ENCODE measurements at regions of chr5 and their contacts with region 1.

Region 1: DNA sequence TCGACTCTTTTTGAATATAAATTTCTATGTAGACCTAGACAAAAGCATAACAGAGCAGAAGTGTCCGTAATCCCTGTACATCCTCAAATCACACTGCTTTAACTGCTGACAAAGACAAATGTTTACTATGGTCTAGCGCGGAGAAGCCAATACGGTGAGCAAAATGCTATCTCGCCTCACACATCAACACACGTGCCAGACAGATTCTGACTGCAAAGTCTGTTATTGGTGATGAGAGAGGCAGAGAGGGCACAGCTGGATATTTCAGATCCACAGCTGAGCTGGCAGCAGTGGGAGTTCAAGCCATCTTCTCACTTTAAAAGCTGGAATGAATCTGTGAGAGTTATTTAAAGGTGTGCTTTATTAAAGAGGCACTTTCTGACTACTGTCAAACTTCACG is 124.3 kb downstream of the ARL15 start:
- DNase-seq: no peak
- ATAC-seq: no peak
- H3K4me3 ChIP-seq: no peak overlapping the region
- H3K27ac ChIP-seq: no peak overlapping the region
- H3K4me1 ChIP-seq: no peaks in the 10 kb centered on the region
- H3K27me3 ChIP-seq: no peaks in the 10 kb centered on the region
- CTCF ChIP-seq: no peak

Region 2: GRCh38 chr5:52983731-52984636 is 1202.1 kb before region 1 on chr5:
- CTCF ChIA-PET with region 1: no interaction called
- POLR2A ChIA-PET with region 1: no interaction called
- in situ Hi-C with region 1: no loop called
- intact Hi-C with region 1: no loop called
- DNase-seq: no peak
- ATAC-seq: no peak
- H3K4me3 ChIP-seq: no peak overlapping the region
- H3K27ac ChIP-seq: no peak overlapping the region
- H3K4me1 ChIP-seq: peaks cover 26% of the 10 kb centered on the region
- H3K27me3 ChIP-seq: no peaks in the 10 kb centered on the region
- CTCF ChIP-seq: no peak

Region 3: DNA sequence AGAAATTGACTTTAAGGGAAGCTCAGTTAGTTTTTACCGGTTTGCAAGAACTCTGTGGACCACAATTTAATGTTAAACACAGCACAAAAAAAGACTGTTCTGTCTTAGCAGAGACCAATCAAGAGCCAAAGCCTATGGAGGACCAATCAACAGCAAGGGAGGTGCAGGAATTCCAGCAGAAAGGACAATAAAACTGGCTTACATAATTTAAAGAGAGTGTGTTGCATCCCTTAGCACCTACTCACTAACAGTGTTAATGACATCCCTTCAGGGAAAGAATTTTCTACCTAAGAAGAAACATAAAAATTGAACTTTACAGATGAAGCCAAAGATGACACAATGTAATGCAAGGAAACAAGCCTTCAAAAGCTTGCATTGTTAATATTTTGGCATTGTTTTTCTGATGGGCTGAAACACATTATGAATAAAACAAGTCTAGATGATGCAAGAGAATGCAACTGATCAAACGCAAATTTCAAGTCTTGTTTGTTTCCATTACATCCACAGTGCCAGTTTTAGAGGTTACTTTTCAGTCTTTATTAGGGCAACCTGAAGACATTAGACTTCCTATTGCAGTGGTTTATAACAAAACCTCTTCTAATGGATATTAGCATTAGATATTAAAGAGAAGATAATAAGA is 817.0 kb before region 1 on chr5:
- CTCF ChIA-PET with region 1: no interaction called
- POLR2A ChIA-PET with region 1: interaction called, 18 read pairs
- in situ Hi-C with region 1: no loop called
- intact Hi-C with region 1: no loop called
- DNase-seq: no peak
- ATAC-seq: no peak
- H3K4me3 ChIP-seq: no peak overlapping the region
- H3K27ac ChIP-seq: no peak overlapping the region
- H3K4me1 ChIP-seq: no peaks in the 10 kb centered on the region
- H3K27me3 ChIP-seq: no peaks in the 10 kb centered on the region
- CTCF ChIP-seq: no peak

Region 4: DNA sequence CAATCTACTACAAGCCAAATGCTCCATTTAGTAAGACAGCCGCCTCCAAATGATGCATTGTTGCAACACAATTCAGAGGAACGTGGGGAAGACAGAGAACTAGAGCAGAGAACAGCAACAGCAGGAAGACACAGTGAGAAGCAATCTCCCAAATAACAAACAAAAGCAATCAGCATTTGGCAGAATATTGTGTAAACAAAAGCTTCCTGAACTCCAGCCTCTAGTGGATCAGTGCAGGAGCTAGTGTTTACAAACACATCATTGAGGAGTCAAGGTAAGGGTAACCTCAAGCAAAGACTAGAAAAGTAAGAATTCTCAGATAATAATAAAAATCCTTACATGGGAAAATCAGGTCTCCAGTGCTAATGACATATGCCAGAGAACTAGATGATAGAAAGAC is 685.1 kb before region 1 on chr5:
- CTCF ChIA-PET with region 1: no interaction called
- POLR2A ChIA-PET with region 1: interaction called, 22 read pairs
- in situ Hi-C with region 1: no loop called
- intact Hi-C with region 1: no loop called
- DNase-seq: no peak
- ATAC-seq: no peak
- H3K4me3 ChIP-seq: no peak overlapping the region
- H3K27ac ChIP-seq: no peak overlapping the region
- H3K4me1 ChIP-seq: no peaks in the 10 kb centered on the region
- H3K27me3 ChIP-seq: peaks cover 6% of the 10 kb centered on the region
- CTCF ChIP-seq: no peak

Region 5: DNA sequence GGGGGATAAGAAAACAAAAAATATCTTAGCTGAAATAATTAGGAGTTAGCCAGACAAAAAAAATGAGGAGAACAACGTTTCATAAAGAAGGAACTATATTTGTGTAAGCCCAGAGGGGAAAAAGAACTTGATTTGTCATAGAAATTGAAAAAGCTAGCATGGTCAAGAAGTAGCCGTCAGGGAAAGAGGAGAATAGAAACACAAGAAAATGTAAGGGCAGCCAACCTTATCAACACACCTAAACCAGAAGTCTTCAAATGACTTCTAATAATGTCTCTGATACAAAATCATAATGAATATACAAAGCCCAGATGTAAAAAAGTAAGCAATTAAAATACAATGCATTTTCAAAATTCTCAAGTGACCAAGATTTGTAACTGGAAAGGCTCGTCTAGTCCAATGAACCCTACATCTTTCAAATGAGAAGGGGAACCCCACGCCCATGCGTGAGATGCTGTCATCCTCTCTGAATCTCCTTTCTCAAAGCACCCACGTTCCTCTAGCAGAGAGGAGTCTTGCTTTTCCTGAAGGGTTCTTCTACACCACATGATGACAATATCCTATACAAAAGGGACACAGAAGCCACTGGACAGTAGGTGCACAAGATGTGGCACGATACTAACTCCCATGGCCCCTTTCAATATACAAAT is 20.6 kb after region 1 on chr5:
- CTCF ChIA-PET with region 1: no interaction called
- POLR2A ChIA-PET with region 1: no interaction called
- in situ Hi-C with region 1: no loop called
- intact Hi-C with region 1: no loop called
- DNase-seq: no peak
- ATAC-seq: no peak
- H3K4me3 ChIP-seq: no peak overlapping the region
- H3K27ac ChIP-seq: no peak overlapping the region
- H3K4me1 ChIP-seq: no peaks in the 10 kb centered on the region
- H3K27me3 ChIP-seq: no peaks in the 10 kb centered on the region
- CTCF ChIP-seq: no peak

Measured in Panc1 (cell line).